Activated CD4-positive, alpha-beta memory T cell treated with anti-CD3 and anti-CD28 coated beads, Interleukin-2, amount 10 ng/mL, durations not matched to agents 7 days and 5 days (primary cell): ENCODE measurements at regions of chr19 and their contacts with region 1.

Region 1: DNA sequence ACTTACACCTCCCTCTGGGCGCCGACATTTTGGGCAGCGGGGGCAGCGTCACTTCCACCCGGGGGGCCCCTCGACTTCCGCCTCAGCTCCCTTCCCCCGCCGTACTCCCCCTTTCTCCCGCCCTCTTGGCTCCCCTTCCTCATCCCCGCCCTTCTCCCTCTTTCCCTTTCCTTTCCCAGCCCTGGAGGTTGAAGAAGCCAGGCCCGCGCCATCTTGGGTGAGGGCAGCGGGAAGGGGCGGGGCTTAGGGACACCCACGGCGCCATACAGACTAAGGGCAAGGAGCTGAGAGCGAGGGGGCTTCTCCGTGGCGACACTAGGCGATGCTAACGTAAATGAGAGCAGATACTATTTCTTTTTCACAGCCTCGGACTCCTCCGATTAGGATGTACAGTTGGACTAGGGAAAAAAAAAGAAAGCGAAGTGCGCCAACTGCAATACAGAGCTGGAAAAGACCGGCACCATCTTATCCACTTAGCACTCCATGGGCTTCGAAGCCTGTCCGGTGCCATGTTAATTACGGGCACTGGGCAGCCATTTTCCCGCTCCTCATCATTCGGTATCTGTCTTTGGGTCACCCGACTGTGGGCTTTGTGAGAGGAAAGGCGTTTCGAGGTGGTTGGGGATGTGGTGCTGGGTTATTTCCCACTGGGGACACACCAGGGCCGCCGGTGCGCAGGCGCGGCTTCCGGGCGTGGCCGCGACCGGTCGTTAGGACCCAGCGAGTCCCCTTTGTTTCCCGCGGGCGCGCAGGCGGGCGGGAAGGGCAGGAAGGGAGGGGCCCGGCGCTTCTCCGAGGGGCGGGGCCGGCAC is at the start of gene FIZ1:
- DNase-seq: peak; percentile 97
- H3K4me3 Mint-ChIP-seq: peak within 1 kb of the TSS; percentile 98
- H3K27ac Mint-ChIP-seq: peak within 1 kb of the TSS; percentile 99
- H3K4me1 Mint-ChIP-seq: peaks cover 35% of the 10 kb centered on the region
- H3K27me3 Mint-ChIP-seq: no peaks in the 10 kb centered on the region
- total RNA-seq, gene FIZ1: 10.9 to 11.7 TPM

Region 2: GRCh38 chr19:55476100-55476775 is 123.4 kb before region 1 on chr19 and contains the start of gene ZNF628:
- CTCF ChIA-PET with region 1: no interaction called
- POLR2A ChIA-PET with region 1: interaction called, 10 read pairs
- DNase-seq: peak; percentile 98
- H3K4me3 Mint-ChIP-seq: peak within 1 kb of the TSS; percentile 90
- H3K27ac Mint-ChIP-seq: peak within 1 kb of the TSS; percentile 86
- H3K4me1 Mint-ChIP-seq: peaks cover 36% of the 10 kb centered on the region
- H3K27me3 Mint-ChIP-seq: no peaks in the 10 kb centered on the region
- total RNA-seq, gene ZNF628: 6.7 to 9.1 TPM

Region 3: DNA sequence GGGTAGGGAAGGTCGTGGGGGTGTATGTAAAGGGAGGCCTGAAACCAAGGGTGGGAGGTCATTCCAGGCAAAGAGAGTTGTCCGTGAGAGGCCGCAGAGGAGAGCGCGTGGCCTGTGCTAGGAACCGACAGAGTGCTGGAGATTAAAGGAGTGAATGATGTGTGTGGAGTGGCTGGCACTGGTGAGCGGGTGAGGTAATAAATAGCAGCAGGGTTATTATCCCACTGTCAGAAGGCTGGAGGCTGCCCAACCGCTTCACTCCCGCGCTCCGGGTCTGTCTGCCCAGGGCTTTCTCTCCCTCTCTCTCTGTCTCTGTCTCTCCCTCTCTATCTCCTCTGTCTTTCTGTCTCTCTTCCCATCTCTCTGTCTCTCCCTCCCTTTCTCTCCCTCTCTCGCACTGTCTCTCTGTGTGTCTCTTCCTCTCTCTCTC is 36.4 kb before region 1 on chr19:
- CTCF ChIA-PET with region 1: no interaction called
- POLR2A ChIA-PET with region 1: no interaction called
- DNase-seq: no peak
- H3K4me3 Mint-ChIP-seq: no peak overlapping the region
- H3K27ac Mint-ChIP-seq: no peak overlapping the region
- H3K4me1 Mint-ChIP-seq: no peaks in the 10 kb centered on the region
- H3K27me3 Mint-ChIP-seq: peaks cover 6% of the 10 kb centered on the region

Region 4: GRCh38 chr19:55586976-55587668 is 12.6 kb before region 1 on chr19:
- CTCF ChIA-PET with region 1: interaction called, 3 read pairs
- POLR2A ChIA-PET with region 1: interaction called, 12 read pairs
- DNase-seq: peak; percentile 89
- H3K4me3 Mint-ChIP-seq: peak overlapping the region; percentile 60
- H3K27ac Mint-ChIP-seq: no peak overlapping the region
- H3K4me1 Mint-ChIP-seq: peaks cover 14% of the 10 kb centered on the region
- H3K27me3 Mint-ChIP-seq: peaks cover 24% of the 10 kb centered on the region

Region 5: DNA sequence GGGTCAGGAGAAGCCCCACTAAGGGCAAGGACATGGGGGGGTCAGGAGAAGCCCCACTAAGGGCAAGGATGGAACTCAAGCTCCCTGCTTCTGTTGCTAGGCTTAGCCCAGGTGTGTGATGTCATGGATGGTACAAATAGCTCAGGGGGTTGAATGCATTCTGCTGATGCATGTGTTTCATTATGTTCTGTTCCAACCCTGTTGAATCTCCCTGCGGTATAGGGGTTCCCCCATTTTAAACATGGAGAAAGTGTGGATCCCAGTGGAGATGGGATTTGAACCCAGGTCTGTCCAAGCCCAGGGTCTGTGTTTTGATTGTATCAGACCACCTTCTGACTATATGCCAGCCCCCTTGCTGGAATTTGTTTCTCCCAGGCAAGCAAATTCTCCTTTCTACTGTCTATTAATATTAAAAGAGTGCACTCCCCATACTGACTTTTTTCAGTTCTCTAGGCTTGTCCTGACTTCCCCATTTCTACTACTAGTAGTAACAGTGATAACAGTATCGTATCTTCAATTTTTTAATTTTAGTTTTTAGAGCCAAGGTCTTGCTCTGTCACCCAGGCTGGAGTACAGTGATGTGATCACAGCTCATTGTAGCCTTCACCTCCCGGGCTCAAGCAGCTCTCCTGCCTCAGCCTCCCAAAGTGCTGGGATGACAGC is 12.4 kb after region 1 on chr19:
- CTCF ChIA-PET with region 1: no interaction called
- POLR2A ChIA-PET with region 1: no interaction called
- DNase-seq: no peak
- H3K4me3 Mint-ChIP-seq: no peak overlapping the region
- H3K27ac Mint-ChIP-seq: no peak overlapping the region
- H3K4me1 Mint-ChIP-seq: peaks cover 18% of the 10 kb centered on the region
- H3K27me3 Mint-ChIP-seq: no peaks in the 10 kb centered on the region

Region 6: GRCh38 chr19:55624109-55625003 is 24.7 kb after region 1 on chr19 and contains the start of gene ZNF784:
- CTCF ChIA-PET with region 1: interaction called, 15 read pairs
- POLR2A ChIA-PET with region 1: interaction called, 53 read pairs
- DNase-seq: peak; percentile 94
- H3K4me3 Mint-ChIP-seq: peak within 1 kb of the TSS; percentile 78
- H3K27ac Mint-ChIP-seq: peak within 1 kb of the TSS; percentile 93
- H3K4me1 Mint-ChIP-seq: peaks cover 50% of the 10 kb centered on the region
- H3K27me3 Mint-ChIP-seq: peaks cover 7% of the 10 kb centered on the region
- total RNA-seq, gene ZNF784: 6.4 to 7.4 TPM

Region 7: GRCh38 chr19:55643348-55644176 is 43.9 kb after region 1 on chr19 and contains the start of gene ZNF581:
- CTCF ChIA-PET with region 1: interaction called, 3 read pairs
- POLR2A ChIA-PET with region 1: interaction called, 13 read pairs
- DNase-seq: peak; percentile 78
- H3K4me3 Mint-ChIP-seq: peak within 1 kb of the TSS; percentile 86
- H3K27ac Mint-ChIP-seq: peak within 1 kb of the TSS; percentile 94
- H3K4me1 Mint-ChIP-seq: peaks cover 54% of the 10 kb centered on the region
- H3K27me3 Mint-ChIP-seq: no peaks in the 10 kb centered on the region
- total RNA-seq, gene ZNF581: 26.6 to 30.1 TPM

Region 8: DNA sequence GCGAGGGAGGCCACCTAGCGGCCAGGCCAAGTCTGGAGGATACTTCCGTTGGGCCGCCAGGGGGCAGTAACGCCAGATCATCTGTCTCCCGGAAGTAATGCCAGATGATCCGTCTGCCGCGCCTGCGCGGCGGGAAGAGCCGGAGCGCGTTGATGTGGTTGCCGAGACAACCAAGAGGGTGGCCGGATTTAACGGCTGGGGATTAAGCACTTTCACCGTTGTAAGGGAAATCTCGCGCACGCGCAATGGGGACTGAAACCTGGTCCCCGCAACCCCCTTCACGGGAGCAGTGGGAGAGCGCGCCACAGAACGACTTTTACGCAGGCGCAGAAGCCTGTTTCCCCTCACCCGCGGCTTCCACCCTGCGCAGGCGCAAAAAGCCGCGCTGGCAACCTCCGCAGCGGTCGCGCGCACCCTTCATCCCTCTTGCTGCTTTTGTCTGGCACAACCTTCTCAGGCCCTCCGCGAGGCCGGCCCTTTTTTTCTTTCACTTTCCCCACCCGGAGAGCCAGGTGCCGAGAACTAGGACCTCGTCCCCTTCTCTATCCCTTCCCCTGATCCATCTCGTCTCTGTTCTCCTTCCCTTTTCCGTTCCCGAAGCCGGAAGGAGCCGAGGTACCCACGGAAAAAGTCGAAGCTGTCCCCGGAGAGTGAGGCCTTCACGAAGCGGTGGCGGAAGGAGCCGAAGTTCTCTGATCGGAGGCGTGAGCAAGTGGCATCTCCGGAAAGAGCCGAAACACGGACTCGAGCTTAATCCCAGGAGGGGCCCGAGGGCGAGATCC is 54.3 kb after region 1 on chr19:
- CTCF ChIA-PET with region 1: interaction called, 14 read pairs
- POLR2A ChIA-PET with region 1: interaction called, 10 read pairs
- DNase-seq: peak; percentile 100
- H3K4me3 Mint-ChIP-seq: peak overlapping the region; percentile 83
- H3K27ac Mint-ChIP-seq: peak overlapping the region; percentile 94
- H3K4me1 Mint-ChIP-seq: peaks cover 39% of the 10 kb centered on the region
- H3K27me3 Mint-ChIP-seq: no peaks in the 10 kb centered on the region